Sigmoid colon (tissue), 7 donors: ENCODE measurements at regions of chr9 and their contacts with region 1.

Region 1: DNA sequence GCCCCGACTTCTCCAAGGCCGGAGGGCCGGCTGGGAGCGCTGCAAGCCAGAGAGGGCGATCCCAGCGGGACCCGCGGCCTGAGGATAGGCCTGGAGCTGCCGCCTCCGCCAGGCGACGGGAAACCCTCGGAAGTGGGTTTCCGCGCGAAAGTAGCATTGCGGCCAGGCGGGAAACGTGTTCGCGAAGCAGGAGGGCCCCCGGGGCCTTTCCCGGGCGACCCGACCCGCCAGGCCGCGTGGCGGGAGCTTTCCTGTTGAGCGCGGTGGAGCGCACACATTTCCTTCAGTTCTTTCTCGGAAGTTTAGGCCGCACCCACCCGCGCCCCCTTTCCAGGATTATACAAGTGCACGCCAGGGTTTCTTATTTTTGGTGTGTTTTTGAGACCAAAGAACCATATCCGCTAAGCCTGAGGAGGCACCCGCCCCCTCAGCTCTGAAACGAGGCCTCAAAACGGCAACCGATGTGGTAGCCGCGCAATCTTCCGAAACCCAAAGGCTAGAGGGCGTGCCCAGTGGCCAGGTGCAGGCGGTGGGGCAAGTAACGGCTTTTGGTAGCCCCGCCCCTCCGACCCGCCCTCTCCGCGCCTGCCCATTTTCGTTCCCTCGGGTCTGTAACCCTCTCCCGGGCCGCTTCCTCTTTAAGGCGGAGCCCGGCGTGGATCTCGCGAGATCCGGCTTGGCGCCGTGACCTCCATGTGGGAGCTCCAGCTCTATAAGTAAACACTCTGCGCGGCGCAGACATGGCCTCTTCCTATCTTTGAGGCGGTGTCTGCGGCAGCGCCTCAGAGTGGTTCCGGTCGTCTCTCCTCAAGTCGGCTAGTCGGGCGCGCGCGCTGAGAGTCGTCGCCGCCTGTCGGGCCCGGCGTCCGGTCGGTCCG is at the start of gene UHRF2:
- DNase-seq: peak; percentile 99
- H3K4me3 ChIP-seq: peak within 1 kb of the TSS; percentile 79 to 99 (median 88)
- H3K27ac ChIP-seq: peak within 1 kb of the TSS; percentile 86 to 90 (median 90)
- H3K4me1 ChIP-seq: peaks cover 0 to 43% (median 28%) of the 10 kb centered on the region in 4 donors
- H3K27me3 ChIP-seq: no peaks in the 10 kb centered on the region
- CTCF ChIP-seq: no peak
- EP300 ChIP-seq: no peak
- POLR2A ChIP-seq: peak; percentile 45 to 46
- total RNA-seq, gene UHRF2: 49.1 to 55.6 (median 53.6) TPM

Region 2: GRCh38 chr9:5437254-5438216 is 975.2 kb before region 1 on chr9 and contains the start of gene PLGRKT:
- intact Hi-C with region 1: loop called (anchors 10 kb)
- DNase-seq: peak; percentile 98
- H3K4me3 ChIP-seq: peak within 1 kb of the TSS; percentile 49 to 71 (median 70)
- H3K27ac ChIP-seq: peak within 1 kb of the TSS; percentile 84 to 94 (median 92)
- H3K4me1 ChIP-seq: peaks cover 0 to 16% (median 15%) of the 10 kb centered on the region in 4 donors
- H3K27me3 ChIP-seq: no peaks in the 10 kb centered on the region
- CTCF ChIP-seq: peak in 1 of 4 experiments; percentile 10
- EP300 ChIP-seq: no peak
- POLR2A ChIP-seq: peak; percentile 80 to 89
- total RNA-seq, gene PLGRKT: 14.1 to 25.0 (median 19.7) TPM

Region 3: DNA sequence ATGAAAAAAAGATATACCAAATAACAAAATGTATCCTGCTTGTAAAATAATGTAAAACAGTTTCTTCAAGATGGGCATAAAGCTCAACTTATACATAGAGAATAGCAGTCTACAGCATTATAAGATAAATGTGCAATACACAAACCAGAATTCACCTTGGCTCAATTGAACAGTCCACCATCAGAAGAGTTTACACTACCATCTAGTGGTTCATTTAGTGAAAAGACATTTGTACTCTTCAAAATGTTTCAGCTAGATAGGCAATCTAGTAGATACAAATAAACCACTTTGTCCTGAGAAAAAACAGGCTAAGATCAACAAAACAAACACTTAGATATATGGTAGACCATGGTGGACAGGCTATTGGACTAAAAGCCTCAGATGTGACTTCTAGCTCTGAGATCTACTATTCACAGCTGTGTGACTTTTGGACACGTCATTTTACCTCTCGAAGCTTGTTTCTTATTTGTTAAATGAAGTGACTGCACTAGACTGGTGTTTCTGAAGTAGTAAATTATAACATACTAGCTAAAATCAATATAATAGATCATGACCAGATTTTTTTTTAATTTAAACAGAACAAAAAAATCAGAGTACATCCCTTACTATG is 106.7 kb before region 1 on chr9:
- intact Hi-C with region 1: no loop called
- DNase-seq: no peak
- H3K4me3 ChIP-seq: no peak overlapping the region
- H3K27ac ChIP-seq: no peak overlapping the region
- H3K4me1 ChIP-seq: no peaks in the 10 kb centered on the region
- H3K27me3 ChIP-seq: no peaks in the 10 kb centered on the region
- CTCF ChIP-seq: peak in 3 of 4 experiments; percentile 50 to 52 (median 51)
- EP300 ChIP-seq: no peak
- POLR2A ChIP-seq: no peak

Region 4: DNA sequence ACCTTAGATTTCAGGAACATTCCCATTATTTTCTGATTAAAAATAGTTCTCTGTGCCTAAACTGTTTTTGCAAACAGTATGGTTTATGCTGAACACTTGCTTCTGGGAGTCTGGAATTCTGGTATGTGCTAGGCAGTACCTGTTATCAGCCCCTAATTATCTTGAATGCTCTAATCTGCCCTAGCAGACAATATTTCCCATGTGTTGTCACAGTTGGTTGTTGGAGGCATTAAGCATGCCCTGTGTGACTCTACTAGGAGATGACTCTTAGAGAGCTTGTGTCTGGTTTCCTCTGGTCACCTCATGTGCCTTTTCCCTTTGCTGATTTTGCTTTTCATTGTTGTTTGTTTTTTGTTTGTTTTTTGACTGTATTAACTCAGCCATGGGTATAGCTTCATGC is 36.9 kb after region 1 on chr9:
- intact Hi-C with region 1: no loop called
- DNase-seq: no peak
- H3K4me3 ChIP-seq: no peak overlapping the region
- H3K27ac ChIP-seq: no peak overlapping the region
- H3K4me1 ChIP-seq: peaks cover 0 to 57% (median 46%) of the 10 kb centered on the region in 4 donors
- H3K27me3 ChIP-seq: no peaks in the 10 kb centered on the region
- CTCF ChIP-seq: no peak
- EP300 ChIP-seq: no peak
- POLR2A ChIP-seq: no peak

Region 5: DNA sequence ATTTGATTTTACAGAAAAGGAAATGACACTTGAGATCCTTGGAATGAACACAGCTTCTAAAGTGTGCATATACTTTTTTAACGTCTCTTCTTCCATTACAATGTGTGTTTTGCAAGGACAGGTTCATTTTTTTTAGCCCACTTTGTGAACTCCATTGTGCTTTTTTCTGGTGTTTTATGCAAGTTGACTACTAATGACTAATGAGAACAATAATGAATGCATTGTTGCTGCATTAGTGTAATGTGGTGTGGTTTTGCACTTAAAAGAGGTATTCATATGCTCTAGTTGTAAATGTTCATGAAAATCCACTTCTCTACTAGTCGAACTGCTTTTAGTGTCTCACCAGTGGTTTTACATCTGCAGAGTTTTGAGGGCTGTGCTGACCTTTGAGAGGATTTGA is 93.8 kb after region 1 on chr9:
- intact Hi-C with region 1: loop called (anchors 10 kb)
- DNase-seq: no peak
- H3K4me3 ChIP-seq: no peak overlapping the region
- H3K27ac ChIP-seq: peak overlapping the region in 1 of 4 donors; percentile 43
- H3K4me1 ChIP-seq: peaks cover 0 to 30% (median 9%) of the 10 kb centered on the region in 4 donors
- H3K27me3 ChIP-seq: no peaks in the 10 kb centered on the region
- CTCF ChIP-seq: no peak
- EP300 ChIP-seq: no peak
- POLR2A ChIP-seq: no peak

Region 6: DNA sequence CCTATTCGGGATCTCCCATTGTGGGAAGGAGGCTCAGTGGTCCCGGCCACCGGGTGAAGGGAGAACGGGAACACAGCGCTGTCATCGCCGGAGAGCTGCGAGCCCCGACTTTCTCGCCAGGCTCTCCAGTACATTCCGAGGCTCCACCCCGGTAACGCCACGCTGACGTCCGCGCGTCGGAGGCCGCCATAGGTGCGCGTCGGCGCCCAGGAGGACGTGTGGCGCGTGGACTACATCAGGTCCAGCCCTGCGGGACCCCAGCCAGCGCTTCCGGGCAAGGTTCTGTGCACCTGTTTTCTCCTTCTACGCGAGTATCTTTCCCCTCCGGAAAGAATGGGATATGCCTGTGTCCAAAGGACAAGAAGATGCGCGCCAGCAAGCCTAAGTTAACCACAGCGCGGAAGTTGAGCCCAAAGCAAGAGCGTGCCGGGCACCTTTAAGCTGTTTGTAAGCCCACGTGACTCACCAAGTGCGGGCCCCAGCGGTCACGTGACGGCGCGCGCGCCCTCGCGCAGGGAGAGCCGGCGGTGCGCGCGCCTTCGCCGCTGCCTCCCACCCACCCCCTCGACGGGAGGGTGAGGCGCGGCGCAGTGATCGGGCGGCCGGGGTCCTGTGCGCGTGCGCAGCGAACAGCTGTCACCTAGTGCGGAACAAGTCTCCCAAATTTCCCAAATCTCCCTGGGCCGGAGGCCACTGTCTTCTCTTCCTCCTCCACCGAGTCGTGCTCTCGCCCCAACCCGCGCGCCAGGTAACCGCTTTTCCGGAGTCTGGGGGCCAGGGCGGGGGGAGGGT is 344.9 kb after region 1 on chr9 and contains the start of gene KDM4C:
- intact Hi-C with region 1: loop called (anchors 2 kb)
- DNase-seq: peak; percentile 98
- H3K4me3 ChIP-seq: peak within 1 kb of the TSS; percentile 74 to 99 (median 89)
- H3K27ac ChIP-seq: peak within 1 kb of the TSS; percentile 95 to 99 (median 98)
- H3K4me1 ChIP-seq: peaks cover 0 to 19% (median 10%) of the 10 kb centered on the region in 4 donors
- H3K27me3 ChIP-seq: no peaks in the 10 kb centered on the region
- CTCF ChIP-seq: no peak
- EP300 ChIP-seq: peak in 2 of 4 donors; percentile 36 to 64
- POLR2A ChIP-seq: peak; percentile 74 to 88
- total RNA-seq, gene KDM4C: 28.8 to 33.5 (median 29.8) TPM